K562 (cell line): ENCODE measurements at regions of chr1 and their contacts with region 1.

Region 1: DNA sequence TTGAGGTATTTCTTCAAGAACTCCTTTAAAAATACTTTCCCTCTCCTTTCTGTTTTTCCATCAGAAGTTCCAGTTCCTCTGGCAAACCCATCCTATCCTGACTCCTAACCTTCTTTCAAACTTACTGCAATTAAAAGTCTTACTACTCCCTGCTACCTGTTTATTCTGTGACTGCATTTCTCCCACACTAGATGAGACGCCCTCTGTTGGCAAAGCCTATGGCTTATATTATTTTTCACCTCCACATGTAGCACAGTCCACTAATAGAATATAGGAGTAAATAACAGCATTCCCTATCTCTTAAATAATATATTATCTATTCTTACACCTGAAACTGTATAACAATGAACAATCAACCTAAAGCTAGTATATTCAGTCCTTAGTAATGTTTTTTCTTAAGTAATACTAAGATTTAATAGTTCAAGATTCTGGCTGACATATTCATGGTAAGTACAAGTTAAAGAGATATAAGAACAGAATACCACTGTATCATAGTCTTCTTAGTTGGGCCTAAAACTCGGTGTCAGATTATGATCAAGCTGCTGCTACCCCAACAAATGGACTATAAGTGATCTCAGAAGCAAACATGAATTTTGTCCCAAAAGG is 54.8 kb downstream of the RAB3GAP2 start:
- DNase-seq: peak in 2 of 4 experiments; percentile 42 to 49
- ATAC-seq: peak; percentile 76
- H3K4me3 ChIP-seq: no peak overlapping the region
- H3K27ac ChIP-seq: no peak overlapping the region
- H3K4me1 ChIP-seq: peaks cover 0 to 9% of the 10 kb centered on the region in 2 experiments; a peak in 1 of 5 replicates
- H3K27me3 ChIP-seq: no peaks in the 10 kb centered on the region
- CTCF ChIP-seq: peak; percentile 56 to 66 (median 63); a peak in 5 of 6 replicates
- EP300 ChIP-seq: no peak
- POLR2A ChIP-seq: no peak
- RAD21 ChIP-seq: no peak; a peak in 1 of 4 replicates

Region 2: DNA sequence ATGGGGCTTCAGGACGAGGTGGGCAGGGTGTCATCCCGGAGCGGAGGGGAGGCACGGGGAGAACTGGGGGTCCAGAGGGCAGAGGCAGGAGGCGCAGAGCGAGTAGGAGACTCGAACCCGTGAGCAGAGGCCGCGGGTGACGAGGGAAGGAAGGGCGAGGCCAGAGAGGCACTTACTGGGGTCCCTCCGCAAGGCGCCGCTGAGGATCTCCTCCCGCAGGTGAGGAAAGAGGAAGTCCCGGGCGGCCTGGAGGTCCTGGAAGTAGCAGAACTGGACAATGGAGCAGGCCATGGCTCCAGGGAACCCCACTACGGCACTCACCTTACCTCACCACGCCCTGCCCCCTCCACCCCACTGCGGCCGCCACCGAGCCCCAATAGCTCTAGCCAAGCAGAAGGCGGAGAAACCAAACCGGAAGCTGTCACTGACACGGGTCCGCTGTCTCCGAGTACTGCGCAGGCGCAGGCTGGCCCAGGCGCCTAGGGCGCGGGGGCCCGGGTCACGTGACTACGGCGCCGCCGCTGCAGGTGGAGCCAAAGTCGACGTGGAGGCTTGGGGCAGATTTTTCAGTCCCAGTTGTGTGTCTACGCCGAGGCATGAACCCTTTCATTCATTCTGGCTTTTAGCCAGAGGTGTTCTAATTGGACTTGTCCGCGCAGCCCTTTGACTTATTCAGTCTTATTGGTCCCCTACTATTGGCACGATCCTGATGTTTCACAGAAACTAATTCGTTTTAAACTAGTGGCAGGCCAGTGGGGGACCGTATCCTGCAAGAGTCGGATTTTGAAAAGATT is 54.8 kb after region 1 on chr1 and contains the start of gene RAB3GAP2:
- CTCF ChIA-PET with region 1: no interaction called
- POLR2A ChIA-PET with region 1: no interaction called
- in situ Hi-C with region 1: no loop called
- intact Hi-C with region 1: loop called (anchors 2 kb)
- DNase-seq: peak; percentile 100
- ATAC-seq: peak; percentile 93
- H3K4me3 ChIP-seq: peak within 1 kb of the TSS; percentile 83
- H3K27ac ChIP-seq: peak within 1 kb of the TSS; percentile 91
- H3K4me1 ChIP-seq: peaks cover 10 to 28% of the 10 kb centered on the region in 2 experiments; a peak in 4 of 5 replicates
- H3K27me3 ChIP-seq: no peaks in the 10 kb centered on the region
- CTCF ChIP-seq: 0 out of 6 replicates have a peak, but pooled peaks of 1 of the 3 experiments have one; percentile 12
- EP300 ChIP-seq: no peak
- POLR2A ChIP-seq: peak; percentile 95
- RAD21 ChIP-seq: peak in 1 of 2 experiments; percentile 8; a peak in 1 of 4 replicates
- polyA plus RNA-seq, gene RAB3GAP2: 14.1 to 17.2 TPM

Region 3: DNA sequence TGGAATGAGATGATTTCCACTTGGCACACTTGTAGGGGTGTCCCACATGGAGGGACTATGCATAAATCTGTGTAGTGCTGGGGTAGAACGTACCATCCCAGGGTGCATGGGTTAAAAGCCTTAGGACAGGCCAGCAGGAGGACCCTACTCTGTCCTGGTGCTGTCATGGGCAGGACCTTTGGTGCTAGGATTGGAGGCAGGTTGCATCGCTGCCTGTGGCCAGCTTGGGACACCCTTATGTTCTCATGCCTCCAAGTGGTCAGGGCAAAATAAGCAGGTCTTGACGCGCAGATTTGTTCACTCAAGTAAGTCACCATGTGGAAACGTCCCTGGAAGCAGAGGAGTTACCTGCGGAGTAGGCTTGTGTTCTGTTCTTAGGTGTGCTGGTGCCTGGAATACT is 104.3 kb after region 1 on chr1:
- CTCF ChIA-PET with region 1: no interaction called
- POLR2A ChIA-PET with region 1: no interaction called
- in situ Hi-C with region 1: no loop called
- intact Hi-C with region 1: loop called (anchors 2 kb)
- DNase-seq: peak in 2 of 4 experiments; percentile 20 to 29
- ATAC-seq: peak; percentile 81
- H3K4me3 ChIP-seq: no peak overlapping the region
- H3K27ac ChIP-seq: no peak overlapping the region
- H3K4me1 ChIP-seq: no peaks in the 10 kb centered on the region
- H3K27me3 ChIP-seq: peaks cover 5 to 15% of the 10 kb centered on the region in 2 experiments; a peak in 3 of 5 replicates
- CTCF ChIP-seq: peak; percentile 28 to 53 (median 32); a peak in 4 of 6 replicates
- EP300 ChIP-seq: no peak
- POLR2A ChIP-seq: no peak
- RAD21 ChIP-seq: peak; percentile 28 to 70